ENCODE measurements at regions of chr10 and their contacts with region 1.

Region 1: DNA sequence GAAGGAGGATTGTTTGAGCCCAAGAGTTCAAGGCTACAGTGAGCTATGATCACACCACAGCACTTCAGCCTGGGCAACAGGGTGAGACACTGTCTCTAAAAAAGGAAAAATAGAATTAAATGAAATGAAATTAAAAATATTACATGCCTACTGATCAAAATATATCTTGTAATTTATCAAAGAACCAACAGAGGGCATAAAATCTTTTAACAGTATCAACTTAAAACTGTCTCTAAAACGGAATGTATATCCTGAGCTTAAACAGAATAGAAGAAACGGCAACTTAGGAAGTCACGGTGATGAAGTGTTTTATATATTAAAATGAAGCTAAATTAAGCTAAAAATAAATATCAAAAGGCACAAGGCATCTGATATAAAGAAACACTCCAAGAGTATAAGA is 78.8 kb downstream of the MTPAP start:
- DNase-seq: no peak
- ATAC-seq: no peak
- H3K4me3 ChIP-seq: no peak overlapping the region
- H3K27ac ChIP-seq: no peak overlapping the region
- H3K4me1 ChIP-seq: no peaks in the 10 kb centered on the region
- H3K27me3 ChIP-seq: peaks cover 0 to 23% (median 5%) of the 10 kb centered on the region in 7 donors
- CTCF ChIP-seq: peak in 1 of 9 donors; percentile 17

Region 2: DNA sequence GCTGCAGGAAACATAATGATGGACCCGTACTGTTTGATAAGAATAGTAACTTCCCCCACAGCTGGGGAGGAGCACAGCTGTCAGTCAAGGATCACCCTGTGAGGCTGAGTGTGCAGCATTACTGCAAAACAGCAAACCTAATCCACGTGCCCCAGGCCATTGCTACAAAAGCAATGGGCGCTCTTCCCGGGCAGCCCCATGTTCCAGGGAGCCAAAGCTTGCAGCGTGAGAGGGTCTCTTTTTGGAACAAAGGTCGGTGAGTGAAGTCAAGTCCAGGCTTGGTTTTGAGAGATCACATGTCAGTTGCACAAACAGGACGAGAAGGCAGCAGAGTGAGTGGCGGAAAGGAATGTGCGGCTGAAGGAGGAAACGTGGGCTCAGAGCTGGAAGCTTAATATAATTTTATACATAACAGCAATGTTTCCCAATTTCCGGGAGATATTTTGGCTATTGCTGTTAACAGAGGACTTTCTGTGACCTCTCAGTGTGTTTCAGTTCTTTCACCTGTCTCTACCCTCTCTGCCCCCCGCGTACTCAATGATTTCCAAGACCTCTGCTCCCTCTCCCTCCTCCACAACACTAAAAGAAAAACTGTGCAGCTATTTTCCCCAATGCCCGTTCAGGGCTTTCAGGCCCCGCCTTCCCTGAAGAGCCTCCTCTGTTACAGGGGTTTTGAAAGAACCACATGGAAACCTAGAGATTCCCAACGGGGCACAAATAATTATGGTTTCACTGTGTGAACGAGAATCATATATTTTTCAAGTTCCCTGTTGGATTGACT is 50.1 kb before region 1 on chr10:
- intact Hi-C with region 1: loop called in 1 of 10 experiments (anchors 1 kb)
- DNase-seq: no peak
- ATAC-seq: peak in 3 of 8 donors; percentile 15 to 55 (median 29)
- H3K4me3 ChIP-seq: peak overlapping the region in 4 of 10 donors; percentile 2 to 19 (median 11)
- H3K27ac ChIP-seq: peak overlapping the region in 4 of 10 donors; percentile 4 to 69 (median 44)
- H3K4me1 ChIP-seq: peaks cover 0 to 38% (median 23%) of the 10 kb centered on the region in 9 donors
- H3K27me3 ChIP-seq: peaks cover 0 to 9% (median 0%) of the 10 kb centered on the region in 7 donors
- CTCF ChIP-seq: no peak